Right cardiac atrium (tissue), 5 donors: ENCODE measurements at regions of chr11 and their contacts with region 1.

Region 1: DNA sequence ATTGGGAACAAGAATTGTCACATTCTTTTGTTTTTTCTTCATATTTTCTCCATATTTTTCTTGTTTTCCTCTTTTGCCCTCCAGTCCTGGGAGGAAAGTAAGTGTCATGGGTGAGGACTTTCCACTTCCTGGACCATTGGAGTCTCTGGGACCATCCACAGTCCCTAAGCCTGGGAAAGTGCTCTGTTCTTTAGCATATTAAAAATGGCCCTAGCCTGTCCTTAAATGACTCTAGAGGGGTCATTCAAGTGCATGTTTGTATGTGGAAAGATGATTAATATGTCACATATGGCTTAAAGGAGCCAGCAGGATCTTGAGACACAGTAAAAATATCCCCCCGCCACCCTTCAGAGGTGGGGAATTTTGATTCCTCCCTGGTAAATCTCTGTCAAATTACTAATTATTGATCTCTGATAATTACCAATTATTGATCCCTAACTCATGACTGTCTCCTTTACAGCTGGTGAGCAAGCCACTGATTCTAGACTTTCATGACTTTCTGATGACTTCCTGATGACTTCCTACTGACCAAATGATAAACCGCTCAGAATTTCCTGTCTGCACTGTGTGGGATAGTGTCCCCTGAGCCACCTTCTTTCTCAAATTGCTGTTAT is 20.0 kb upstream of the SCGB1D1 start:
- DNase-seq: no peak
- ATAC-seq: peak in 1 of 2 donors; percentile 25
- H3K4me3 ChIP-seq: no peak overlapping the region
- H3K27ac ChIP-seq: no peak overlapping the region
- H3K4me1 ChIP-seq: no peaks in the 10 kb centered on the region
- H3K27me3 ChIP-seq: no peaks in the 10 kb centered on the region

Region 2: DNA sequence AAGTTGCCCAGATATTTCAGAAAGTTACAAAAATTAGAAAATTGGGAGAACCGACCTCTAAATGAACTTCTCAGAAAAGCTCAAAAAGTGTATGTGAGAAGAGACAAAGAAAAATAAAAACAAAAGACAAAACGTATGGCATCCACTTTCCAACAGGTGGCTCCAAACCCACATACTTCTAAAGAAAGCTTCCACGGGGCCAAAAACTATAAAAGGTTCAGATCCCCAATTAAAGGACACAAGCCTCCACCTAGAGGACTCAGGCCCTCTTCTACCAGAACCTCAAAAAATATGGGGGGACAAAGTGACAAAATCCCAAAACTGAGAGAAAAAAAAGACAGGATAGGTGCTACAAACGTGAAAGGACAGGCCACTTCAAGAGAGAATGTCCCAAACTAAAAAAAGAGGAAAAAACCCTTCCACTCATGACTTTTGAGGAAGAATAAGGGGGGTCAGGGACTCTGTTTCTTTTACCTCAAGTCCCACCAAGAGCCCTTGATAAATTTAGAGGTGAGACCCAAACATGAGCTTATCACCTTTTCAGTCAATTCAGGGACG is 47.2 kb after region 1 on chr11:
- intact Hi-C with region 1: no loop called
- DNase-seq: no peak
- ATAC-seq: no peak
- H3K4me3 ChIP-seq: no peak overlapping the region
- H3K27ac ChIP-seq: no peak overlapping the region
- H3K4me1 ChIP-seq: no peaks in the 10 kb centered on the region
- H3K27me3 ChIP-seq: no peaks in the 10 kb centered on the region

Region 3: DNA sequence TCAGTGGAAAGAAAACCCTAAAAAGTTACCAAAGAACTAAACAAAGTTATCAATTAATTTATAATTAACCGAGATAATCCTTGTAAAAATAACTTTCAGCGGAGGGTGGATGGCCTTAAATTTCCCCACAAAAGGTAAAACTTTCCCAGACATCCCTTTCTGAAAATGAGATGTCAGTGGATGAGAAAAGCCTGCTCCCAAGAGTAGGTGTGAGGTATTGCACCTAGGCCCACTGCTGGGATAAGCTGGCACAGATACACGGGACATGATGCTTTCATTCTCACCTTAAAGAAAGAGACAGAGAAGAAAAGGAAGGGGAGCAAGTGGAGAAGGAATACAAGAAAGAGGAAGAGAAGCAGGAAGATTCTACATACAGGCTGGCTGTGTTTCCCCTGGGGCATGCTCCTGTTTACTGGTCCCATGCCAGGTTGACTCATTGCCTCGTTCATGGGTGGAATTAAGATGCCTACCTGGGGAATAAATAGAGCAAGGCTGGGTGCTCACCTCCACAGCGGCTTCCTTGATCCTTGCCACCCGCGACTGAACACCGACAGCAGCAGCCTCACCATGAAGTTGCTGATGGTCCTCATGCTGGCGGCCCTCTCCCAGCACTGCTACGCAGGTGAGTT is 99.7 kb after region 1 on chr11 and contains the start of gene SCGB2A2:
- intact Hi-C with region 1: no loop called
- DNase-seq: no peak
- ATAC-seq: no peak
- H3K4me3 ChIP-seq: no peak within 1 kb of the TSS
- H3K27ac ChIP-seq: no peak within 1 kb of the TSS
- H3K4me1 ChIP-seq: no peaks in the 10 kb centered on the region
- H3K27me3 ChIP-seq: no peaks in the 10 kb centered on the region
- total RNA-seq, gene SCGB2A2: not detected

Region 4: DNA sequence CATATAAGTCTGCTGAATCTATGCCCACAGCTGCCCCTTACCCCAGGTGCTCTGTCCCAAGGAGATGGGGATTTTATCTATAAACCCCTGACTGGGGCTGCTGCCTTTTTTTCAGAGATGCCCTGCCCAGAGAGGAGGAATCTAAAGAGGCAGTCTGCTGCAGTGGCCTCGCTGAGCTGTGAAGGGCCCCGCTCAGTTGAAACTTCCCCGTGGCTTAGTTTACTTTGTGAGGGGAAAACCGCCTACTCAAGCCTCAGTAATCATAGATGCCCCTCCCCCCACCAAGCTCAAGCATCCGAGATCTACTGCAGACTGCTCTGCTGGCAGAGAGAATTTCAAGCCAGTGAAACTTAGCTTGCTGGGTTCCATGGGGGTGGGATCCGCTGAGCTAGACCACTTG is 136.2 kb after region 1 on chr11:
- intact Hi-C with region 1: loop called in 3 of 4 experiments (anchors 5 to 10 kb)
- DNase-seq: no peak
- ATAC-seq: no peak
- H3K4me3 ChIP-seq: no peak overlapping the region
- H3K27ac ChIP-seq: no peak overlapping the region
- H3K4me1 ChIP-seq: no peaks in the 10 kb centered on the region
- H3K27me3 ChIP-seq: peaks cover 4% of the 10 kb centered on the region

Region 5: GRCh38 chr11:62315431-62315830 is 145.4 kb after region 1 on chr11:
- intact Hi-C with region 1: loop called in 2 of 4 experiments (anchors 10 kb)
- DNase-seq: no peak
- ATAC-seq: no peak
- H3K4me3 ChIP-seq: no peak overlapping the region
- H3K27ac ChIP-seq: no peak overlapping the region
- H3K4me1 ChIP-seq: no peaks in the 10 kb centered on the region
- H3K27me3 ChIP-seq: no peaks in the 10 kb centered on the region